ENCODE measurements at regions of chr21 and their contacts with region 1.

Region 1: GRCh38 chr21:31866077-31866511 is 6.7 kb upstream of the HUNK start:
- DNase-seq: peak; percentile 76
- H3K4me3 ChIP-seq: no peak overlapping the region
- H3K27ac ChIP-seq: no peak overlapping the region
- H3K4me1 ChIP-seq: no peaks in the 10 kb centered on the region
- H3K27me3 ChIP-seq: peaks cover 21% of the 10 kb centered on the region
- CTCF ChIP-seq: peak; percentile 91

Region 2: GRCh38 chr21:31335957-31336738 is 529.9 kb before region 1 on chr21:
- CTCF ChIA-PET with region 1: no interaction called
- POLR2A ChIA-PET with region 1: no interaction called
- intact Hi-C with region 1: no loop called
- DNase-seq: no peak
- H3K4me3 ChIP-seq: no peak overlapping the region
- H3K27ac ChIP-seq: no peak overlapping the region
- H3K4me1 ChIP-seq: no peaks in the 10 kb centered on the region
- H3K27me3 ChIP-seq: no peaks in the 10 kb centered on the region
- CTCF ChIP-seq: no peak

Region 3: DNA sequence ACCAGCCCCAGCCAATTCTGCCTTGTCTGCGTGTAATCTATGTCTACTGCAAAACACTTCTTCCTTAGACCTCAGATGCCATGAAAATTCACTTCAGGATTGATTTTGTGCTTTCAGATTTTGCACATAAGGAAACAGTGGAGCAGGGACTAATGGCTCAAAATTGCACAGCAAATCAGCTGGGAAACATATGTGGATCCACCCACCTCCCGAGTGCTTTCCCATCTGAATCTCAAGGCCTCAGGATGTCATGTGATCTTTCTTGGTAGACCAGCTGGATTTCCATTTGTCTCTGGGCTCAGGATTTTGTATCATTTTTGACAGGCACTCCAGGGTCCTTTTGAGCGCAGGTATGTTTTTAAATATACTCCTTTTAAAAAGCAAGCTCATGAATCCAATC is 254.1 kb after region 1 on chr21:
- CTCF ChIA-PET with region 1: interaction called, 12 read pairs
- POLR2A ChIA-PET with region 1: no interaction called
- intact Hi-C with region 1: no loop called
- DNase-seq: no peak
- H3K4me3 ChIP-seq: no peak overlapping the region
- H3K27ac ChIP-seq: no peak overlapping the region
- H3K4me1 ChIP-seq: no peaks in the 10 kb centered on the region
- H3K27me3 ChIP-seq: peaks cover 26% of the 10 kb centered on the region
- CTCF ChIP-seq: no peak

Region 4: DNA sequence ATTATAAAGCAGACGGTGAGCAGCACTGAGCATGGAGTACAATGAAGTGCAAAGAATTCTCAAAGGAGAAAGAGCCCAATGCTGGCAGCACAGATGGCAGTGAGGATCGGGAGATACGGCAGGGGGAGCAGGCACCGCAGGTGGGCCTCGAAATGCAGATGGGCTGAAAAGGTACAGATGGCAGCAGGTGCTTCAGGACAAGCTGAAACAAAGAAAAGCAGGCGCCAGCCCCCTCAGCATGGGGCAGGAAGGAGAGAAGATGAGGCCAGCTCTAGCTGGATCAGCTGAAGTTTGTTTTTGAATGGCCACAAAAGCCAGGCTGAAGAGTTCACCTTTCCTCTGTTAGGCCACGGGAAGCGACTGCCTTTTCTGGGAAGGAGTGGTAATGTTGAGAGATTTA is 738.4 kb after region 1 on chr21:
- CTCF ChIA-PET with region 1: interaction called, 3 read pairs
- POLR2A ChIA-PET with region 1: no interaction called
- intact Hi-C with region 1: loop called (anchors 5 kb)
- DNase-seq: no peak
- H3K4me3 ChIP-seq: no peak overlapping the region
- H3K27ac ChIP-seq: no peak overlapping the region
- H3K4me1 ChIP-seq: no peaks in the 10 kb centered on the region
- H3K27me3 ChIP-seq: no peaks in the 10 kb centered on the region
- CTCF ChIP-seq: no peak